ENCODE measurements at regions of chr2 and their contacts with region 1.

Region 1: GRCh38 chr2:96509114-96509846 is 4.1 kb upstream of the NEURL3 start:
- DNase-seq: peak; percentile 75
- H3K4me3 ChIP-seq: no peak overlapping the region
- H3K27ac ChIP-seq: no peak overlapping the region
- H3K4me1 ChIP-seq: peaks cover 25% of the 10 kb centered on the region
- H3K27me3 ChIP-seq: no peaks in the 10 kb centered on the region
- CTCF ChIP-seq: peak; percentile 90 to 99

Region 2: DNA sequence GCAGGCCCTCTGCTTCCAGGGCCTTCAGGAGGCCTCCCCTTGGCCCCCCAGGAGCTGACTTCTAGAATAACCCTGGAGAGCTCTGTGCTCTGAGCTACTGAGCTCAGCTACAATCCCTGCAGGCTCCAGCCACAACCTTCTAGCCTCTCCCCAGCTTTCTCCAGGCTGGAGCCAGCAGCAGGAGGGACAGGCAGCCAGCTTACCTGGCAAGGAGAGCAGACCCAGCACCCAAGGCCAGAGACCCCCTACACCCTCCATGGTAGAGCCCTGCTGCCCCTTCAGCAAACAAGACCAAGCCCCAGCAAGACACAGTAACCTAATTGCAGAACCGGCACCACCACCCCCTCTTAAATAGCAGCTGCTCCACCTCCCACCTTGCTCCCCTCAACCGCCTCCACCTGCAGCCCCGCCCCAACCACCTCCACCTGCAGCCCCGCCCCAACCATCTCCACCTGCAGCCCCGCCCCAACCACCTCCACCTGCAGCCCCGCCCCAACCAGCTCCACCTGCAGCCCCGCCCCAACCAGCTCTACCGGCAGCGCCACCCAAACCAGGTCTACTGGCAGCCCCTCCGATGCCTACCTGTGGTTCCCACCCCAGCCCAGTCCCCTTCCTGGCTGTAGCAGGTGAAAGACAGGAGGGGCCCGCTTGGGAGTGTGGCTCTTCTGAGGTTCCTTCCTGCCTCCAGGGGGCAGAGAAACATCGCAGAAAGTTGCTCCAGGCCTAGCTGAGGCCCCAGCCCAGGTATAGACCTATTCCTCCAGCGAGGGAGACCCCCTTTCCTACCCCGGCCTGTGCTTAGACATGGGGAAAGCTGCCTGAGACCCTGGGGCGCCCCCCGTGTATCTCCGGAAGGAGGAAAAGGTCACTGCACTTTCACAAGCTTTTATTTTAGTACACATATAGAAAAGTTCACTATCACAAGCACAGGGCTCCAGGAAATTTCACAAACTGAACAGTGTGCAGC is 370.8 kb before region 1 on chr2 and contains the start of gene ASTL:
- CTCF ChIA-PET with region 1: no interaction called
- dilution Hi-C with region 1: no loop called
- in situ Hi-C with region 1: no loop called
- intact Hi-C with region 1: loop called (anchors 1 kb)
- DNase-seq: peak; percentile 19
- H3K4me3 ChIP-seq: no peak within 1 kb of the TSS
- H3K27ac ChIP-seq: no peak within 1 kb of the TSS
- H3K4me1 ChIP-seq: no peaks in the 10 kb centered on the region
- H3K27me3 ChIP-seq: no peaks in the 10 kb centered on the region
- CTCF ChIP-seq: peak; percentile 44 to 65
- total RNA-seq, gene ASTL: 0.33 TPM in 1 of 2 donors, not detected in the other

Region 3: DNA sequence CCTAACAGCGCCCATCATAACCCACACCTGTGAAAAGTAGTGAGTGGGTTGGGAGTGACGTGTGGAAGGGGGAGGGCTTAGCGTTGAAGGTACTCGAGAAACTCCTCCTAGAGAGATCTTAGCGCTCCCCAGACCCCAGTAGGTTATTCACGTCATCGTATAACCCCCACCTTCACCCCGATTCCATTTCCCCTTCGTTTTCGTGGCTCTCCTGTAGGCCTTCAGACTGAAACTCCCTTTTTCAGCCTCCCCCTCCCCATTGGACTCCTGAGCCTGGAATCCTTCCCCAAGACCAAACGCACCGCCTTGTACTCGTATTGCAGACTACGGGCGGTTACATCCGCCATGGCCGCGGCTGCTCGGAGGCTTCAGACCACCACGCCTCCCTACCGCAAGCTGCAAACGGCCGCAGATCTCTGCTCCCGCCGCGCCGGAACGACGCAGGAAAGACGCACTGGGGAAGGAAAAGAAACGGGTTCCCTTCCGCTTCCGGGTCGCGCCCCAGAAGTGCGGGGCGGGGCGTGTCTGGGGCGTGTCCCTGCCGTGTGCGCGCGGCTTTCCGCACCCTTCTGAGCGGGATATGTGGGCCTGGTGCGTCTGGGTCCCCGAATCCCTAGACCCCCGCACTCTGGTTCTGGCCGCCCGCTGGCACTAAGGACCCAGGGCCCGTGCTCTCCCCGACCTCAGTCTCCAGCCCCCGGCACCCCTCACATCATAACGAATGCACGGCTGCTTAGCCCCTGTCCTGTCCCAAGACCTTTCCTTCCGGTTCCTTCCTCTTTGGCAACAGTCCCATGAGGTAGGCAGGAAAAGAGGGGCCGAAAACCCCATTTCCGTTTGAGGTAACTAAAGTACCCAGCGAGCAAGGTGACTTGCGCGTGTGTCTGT is 203.9 kb before region 1 on chr2 and contains the start of gene SNRNP200:
- CTCF ChIA-PET with region 1: no interaction called
- dilution Hi-C with region 1: no loop called
- in situ Hi-C with region 1: loop called in 1 of 2 experiments (anchors 25 kb)
- intact Hi-C with region 1: loop called (anchors 1 kb)
- DNase-seq: peak; percentile 84
- H3K4me3 ChIP-seq: peak within 1 kb of the TSS; percentile 74 to 97 (median 84)
- H3K27ac ChIP-seq: peak within 1 kb of the TSS; percentile 79
- H3K4me1 ChIP-seq: peaks cover 15% of the 10 kb centered on the region
- H3K27me3 ChIP-seq: no peaks in the 10 kb centered on the region
- CTCF ChIP-seq: no peak
- total RNA-seq, gene SNRNP200: 45.5 to 93.8 TPM

Region 4: GRCh38 chr2:96407041-96407918 is 102.0 kb before region 1 on chr2:
- CTCF ChIA-PET with region 1: interaction called, 19 read pairs
- dilution Hi-C with region 1: no loop called
- in situ Hi-C with region 1: loop called (anchors 5 kb)
- intact Hi-C with region 1: loop called (anchors 1 kb)
- DNase-seq: peak; percentile 56
- H3K4me3 ChIP-seq: no peak overlapping the region
- H3K27ac ChIP-seq: no peak overlapping the region
- H3K4me1 ChIP-seq: peaks cover 9% of the 10 kb centered on the region
- H3K27me3 ChIP-seq: no peaks in the 10 kb centered on the region
- CTCF ChIP-seq: peak; percentile 84 to 89

Region 5: DNA sequence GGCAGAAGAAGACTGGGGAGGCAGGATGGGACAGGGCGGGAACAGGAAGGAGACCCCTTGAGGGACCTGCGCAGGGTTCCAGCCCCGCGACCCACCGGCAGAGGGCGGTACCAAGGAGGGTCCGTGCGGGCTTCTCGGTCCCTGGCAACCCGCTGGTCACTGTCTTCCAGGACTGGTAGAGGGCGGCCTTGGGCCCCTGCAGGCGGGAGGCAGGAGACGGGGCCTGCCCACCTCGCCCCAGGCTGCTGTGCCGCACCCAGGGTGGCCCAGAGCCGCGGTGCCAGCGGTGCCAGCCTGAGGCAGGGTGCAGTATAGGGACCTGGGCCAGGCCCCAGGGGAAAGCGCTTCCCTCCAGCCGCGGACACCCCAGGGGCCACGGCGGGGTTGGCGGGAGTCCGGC is 38.6 kb before region 1 on chr2:
- CTCF ChIA-PET with region 1: no interaction called
- dilution Hi-C with region 1: no loop called
- in situ Hi-C with region 1: no loop called
- intact Hi-C with region 1: loop called (anchors 1 kb)
- DNase-seq: no peak
- H3K4me3 ChIP-seq: no peak overlapping the region
- H3K27ac ChIP-seq: no peak overlapping the region
- H3K4me1 ChIP-seq: no peaks in the 10 kb centered on the region
- H3K27me3 ChIP-seq: no peaks in the 10 kb centered on the region
- CTCF ChIP-seq: peak; percentile 22 to 40

Region 6: GRCh38 chr2:96580771-96581170 is 71.5 kb after region 1 on chr2:
- CTCF ChIA-PET with region 1: no interaction called
- dilution Hi-C with region 1: no loop called
- in situ Hi-C with region 1: no loop called
- intact Hi-C with region 1: loop called (anchors 1 kb)
- DNase-seq: peak; percentile 10
- H3K4me3 ChIP-seq: no peak overlapping the region
- H3K27ac ChIP-seq: no peak overlapping the region
- H3K4me1 ChIP-seq: no peaks in the 10 kb centered on the region
- H3K27me3 ChIP-seq: no peaks in the 10 kb centered on the region
- CTCF ChIP-seq: no peak

Region 7: GRCh38 chr2:96773922-96774321 is 264.6 kb after region 1 on chr2:
- CTCF ChIA-PET with region 1: no interaction called
- dilution Hi-C with region 1: no loop called
- in situ Hi-C with region 1: no loop called
- intact Hi-C with region 1: no loop called
- DNase-seq: no peak
- H3K4me3 ChIP-seq: peak overlapping the region; percentile 29 to 50 (median 43)
- H3K27ac ChIP-seq: peak overlapping the region; percentile 7
- H3K4me1 ChIP-seq: peaks cover 4% of the 10 kb centered on the region
- H3K27me3 ChIP-seq: no peaks in the 10 kb centered on the region
- CTCF ChIP-seq: no peak